Tibial artery (tissue), 4 donors: ENCODE measurements at regions of chr19 and their contacts with region 1.

Region 1: GRCh38 chr19:52148256-52148655 is 8.5 kb upstream of the ZNF616 start:
- DNase-seq: no peak
- H3K4me3 ChIP-seq: no peak overlapping the region
- H3K27ac ChIP-seq: no peak overlapping the region
- H3K4me1 ChIP-seq: peaks cover 0 to 3% (median 0%) of the 10 kb centered on the region in 4 donors
- H3K27me3 ChIP-seq: no peaks in the 10 kb centered on the region
- CTCF ChIP-seq: no peak

Region 2: GRCh38 chr19:52219611-52220010 is 71.4 kb after region 1 on chr19:
- intact Hi-C with region 1: loop called (anchors 5 kb)
- DNase-seq: peak in 1 of 2 donors; percentile 56
- H3K4me3 ChIP-seq: no peak overlapping the region
- H3K27ac ChIP-seq: no peak overlapping the region
- H3K4me1 ChIP-seq: no peaks in the 10 kb centered on the region
- H3K27me3 ChIP-seq: no peaks in the 10 kb centered on the region
- CTCF ChIP-seq: no peak